CD14-positive monocyte (primary cell): ENCODE measurements at regions of chr14 and their contacts with region 1.

Region 1: DNA sequence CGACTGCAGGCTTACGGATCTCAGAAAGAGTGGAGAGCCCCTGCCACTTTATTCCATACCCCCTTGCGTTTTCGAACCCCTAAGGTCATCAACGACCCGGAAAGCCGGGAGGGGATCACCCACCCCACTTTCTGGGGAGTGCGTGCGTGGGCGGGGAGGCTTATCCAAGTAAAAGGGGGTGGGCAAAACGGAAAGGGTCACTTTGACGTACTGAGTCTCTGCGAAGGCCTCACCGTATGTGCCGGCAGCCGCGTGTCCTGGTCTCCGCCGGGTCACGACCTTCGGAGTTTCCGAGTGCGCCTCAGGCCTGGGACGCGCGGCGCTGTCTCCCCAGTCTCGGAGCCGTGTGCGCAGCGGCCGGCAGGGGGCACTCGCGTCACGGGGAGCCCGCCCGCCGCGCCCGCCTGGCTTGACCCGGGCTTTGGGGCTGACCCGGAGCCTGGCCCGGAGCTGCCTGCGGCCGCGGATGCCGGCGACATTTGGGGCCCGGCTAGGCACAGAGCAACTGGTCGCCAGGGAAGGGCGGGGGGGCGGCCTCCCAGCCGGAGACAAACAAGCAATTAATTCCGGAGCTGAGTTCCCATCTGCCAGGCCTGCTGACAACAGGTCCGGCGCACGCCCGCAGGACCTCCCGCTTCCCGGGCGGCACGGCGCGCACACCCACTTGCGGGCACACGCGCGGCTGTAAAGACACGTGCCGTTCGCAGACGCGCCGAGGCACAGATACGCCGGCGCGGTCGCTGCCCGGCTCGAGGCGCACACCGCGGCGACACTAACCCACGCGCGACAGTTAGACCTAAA is 890 bp upstream of the KIF26A start:
- DNase-seq: peak in 2 of 3 donors; percentile 23 to 31
- H3K4me3 ChIP-seq: peak overlapping the region in 1 of 3 experiments; percentile 61
- H3K4me3 Mint-ChIP-seq: peak overlapping the region; percentile 59 to 82
- H3K27ac ChIP-seq: no peak overlapping the region
- H3K27ac Mint-ChIP-seq: no peak overlapping the region
- H3K4me1 ChIP-seq: peaks cover 8 to 15% of the 10 kb centered on the region in 2 donors
- H3K4me1 Mint-ChIP-seq: peaks cover 11% of the 10 kb centered on the region
- H3K27me3 ChIP-seq: peaks cover 15 to 51% of the 10 kb centered on the region in 2 donors
- H3K27me3 Mint-ChIP-seq: peaks cover 58 to 77% (median 66%) of the 10 kb centered on the region in 3 donors
- CTCF ChIP-seq: peak; percentile 73

Region 2: GRCh38 chr14:104639889-104640548 is 502.5 kb after region 1 on chr14:
- intact Hi-C with region 1: loop called in 1 of 2 experiments (anchors 10 kb)
- DNase-seq: peak in 2 of 3 donors; percentile 13 to 43
- H3K4me3 ChIP-seq: no peak overlapping the region
- H3K4me3 Mint-ChIP-seq: no peak overlapping the region
- H3K27ac ChIP-seq: no peak overlapping the region
- H3K27ac Mint-ChIP-seq: no peak overlapping the region
- H3K4me1 ChIP-seq: peaks cover 3 to 9% of the 10 kb centered on the region in 2 donors
- H3K4me1 Mint-ChIP-seq: peaks cover 13% of the 10 kb centered on the region
- H3K27me3 ChIP-seq: no peaks in the 10 kb centered on the region
- H3K27me3 Mint-ChIP-seq: peaks cover 2 to 15% (median 12%) of the 10 kb centered on the region in 3 donors
- CTCF ChIP-seq: peak; percentile 90

Region 3: DNA sequence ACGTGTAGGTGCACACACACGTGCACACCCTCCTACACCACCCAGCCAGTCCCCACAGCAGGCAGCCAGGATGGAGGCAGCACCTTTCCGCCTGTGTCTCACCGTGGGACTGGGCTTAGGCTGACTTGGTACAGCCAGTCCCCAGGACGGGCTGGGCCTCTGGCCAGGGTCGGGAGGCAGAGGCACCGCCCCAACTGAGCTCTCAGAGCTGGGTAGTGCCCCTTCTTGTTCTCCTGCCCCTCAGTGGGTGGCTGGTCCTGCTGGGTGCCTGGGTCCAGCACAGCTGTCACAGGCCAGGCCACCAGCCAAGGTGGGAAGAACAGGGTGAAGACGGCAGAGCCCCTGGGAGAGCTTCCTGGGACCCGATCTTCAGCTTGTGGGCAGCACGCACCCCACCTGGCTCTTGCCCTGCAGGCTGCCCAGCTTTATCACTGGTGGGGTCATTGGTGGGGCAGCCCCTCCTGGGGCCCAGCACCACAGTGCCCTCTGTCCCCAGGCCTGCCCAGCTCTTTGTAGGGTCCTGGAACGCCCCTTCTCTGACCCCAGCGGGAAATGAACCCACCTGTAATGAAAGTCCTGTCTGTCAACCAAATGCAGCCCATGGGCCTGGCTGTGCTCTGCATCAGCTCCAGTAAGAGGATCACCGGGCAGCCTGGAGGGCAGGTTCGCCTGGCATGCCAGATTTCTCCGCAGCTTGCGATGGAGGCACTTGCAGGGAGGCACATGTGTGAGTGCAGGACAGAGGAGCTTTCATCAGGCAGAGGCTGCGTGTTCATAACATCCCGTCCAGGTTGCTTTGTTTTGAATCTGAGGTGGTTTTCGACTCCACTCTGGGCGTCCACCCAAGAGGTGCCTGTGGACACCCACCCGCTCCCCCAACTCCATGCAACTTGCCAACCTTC is 868.7 kb after region 1 on chr14:
- intact Hi-C with region 1: loop called in 1 of 2 experiments (anchors 10 kb)
- DNase-seq: no peak
- H3K4me3 ChIP-seq: no peak overlapping the region
- H3K4me3 Mint-ChIP-seq: no peak overlapping the region
- H3K27ac ChIP-seq: no peak overlapping the region
- H3K27ac Mint-ChIP-seq: peak overlapping the region in 3 of 7 donors; percentile 44 to 60 (median 50)
- H3K4me1 ChIP-seq: no peaks in the 10 kb centered on the region
- H3K4me1 Mint-ChIP-seq: no peaks in the 10 kb centered on the region
- H3K27me3 ChIP-seq: no peaks in the 10 kb centered on the region
- H3K27me3 Mint-ChIP-seq: peaks cover 0 to 2% (median 0%) of the 10 kb centered on the region in 3 donors
- CTCF ChIP-seq: no peak